OCI-LY7 (cell line): ENCODE measurements at regions of chr1 and their contacts with region 1.

Region 1: DNA sequence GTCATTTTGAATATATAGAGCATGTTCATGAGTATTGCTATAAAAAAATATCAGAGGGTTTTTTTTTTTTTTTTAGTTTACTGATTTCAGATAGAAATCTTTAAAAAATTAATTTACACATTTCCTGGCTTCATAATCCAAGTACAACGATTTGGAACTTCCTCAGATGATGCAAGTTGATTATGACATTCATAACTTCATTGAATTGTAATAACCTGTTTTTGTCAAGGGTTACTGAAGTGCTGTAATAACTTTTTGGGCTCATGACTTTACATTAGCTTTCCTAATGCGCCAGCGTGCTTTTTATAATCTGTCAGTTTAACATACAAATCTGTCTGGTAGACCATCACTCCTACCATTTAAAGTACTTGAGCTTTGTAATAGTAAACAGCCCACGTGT is 81.3 kb downstream of the SASS6 start:
- DNase-seq: no peak
- H3K4me3 ChIP-seq: no peak overlapping the region
- H3K27ac ChIP-seq: no peak overlapping the region
- H3K4me1 ChIP-seq: peaks cover 41% of the 10 kb centered on the region
- CTCF ChIP-seq: no peak

Region 2: GRCh38 chr1:98221923-98222322 is 1829.5 kb before region 1 on chr1:
- CTCF ChIA-PET with region 1: no interaction called
- POLR2A ChIA-PET with region 1: interaction called, 10 read pairs
- intact Hi-C with region 1: no loop called
- DNase-seq: no peak
- H3K4me3 ChIP-seq: no peak overlapping the region
- H3K27ac ChIP-seq: no peak overlapping the region
- H3K4me1 ChIP-seq: no peaks in the 10 kb centered on the region
- CTCF ChIP-seq: no peak

Region 3: GRCh38 chr1:100061681-100062080 is 10.3 kb after region 1 on chr1:
- CTCF ChIA-PET with region 1: no interaction called
- POLR2A ChIA-PET with region 1: interaction called, 11 read pairs
- intact Hi-C with region 1: no loop called
- DNase-seq: no peak
- H3K4me3 ChIP-seq: no peak overlapping the region
- H3K27ac ChIP-seq: no peak overlapping the region
- H3K4me1 ChIP-seq: peaks cover 24% of the 10 kb centered on the region
- CTCF ChIP-seq: no peak